ENCODE measurements at regions of chr14 and their contacts with region 1.

Region 1: GRCh38 chr14:22570132-22570949 is 18.7 kb downstream of the DAD1 start:
- DNase-seq: peak in 8 of 9 donors; percentile 72 to 98 (median 96)
- ATAC-seq: peak; percentile 98
- H3K4me3 ChIP-seq: peak overlapping the region; percentile 53
- H3K4me3 Mint-ChIP-seq: peak overlapping the region; percentile 68 to 95 (median 80)
- H3K27ac ChIP-seq: peak overlapping the region; percentile 87
- H3K27ac Mint-ChIP-seq: peak overlapping the region; percentile 77 to 99 (median 96)
- H3K4me1 ChIP-seq: peaks cover 49 to 51% of the 10 kb centered on the region in 2 donors
- H3K4me1 Mint-ChIP-seq: peaks cover 28 to 72% (median 68%) of the 10 kb centered on the region in 7 donors
- H3K27me3 ChIP-seq: no peaks in the 10 kb centered on the region
- H3K27me3 Mint-ChIP-seq: no peaks in the 10 kb centered on the region

Region 2: DNA sequence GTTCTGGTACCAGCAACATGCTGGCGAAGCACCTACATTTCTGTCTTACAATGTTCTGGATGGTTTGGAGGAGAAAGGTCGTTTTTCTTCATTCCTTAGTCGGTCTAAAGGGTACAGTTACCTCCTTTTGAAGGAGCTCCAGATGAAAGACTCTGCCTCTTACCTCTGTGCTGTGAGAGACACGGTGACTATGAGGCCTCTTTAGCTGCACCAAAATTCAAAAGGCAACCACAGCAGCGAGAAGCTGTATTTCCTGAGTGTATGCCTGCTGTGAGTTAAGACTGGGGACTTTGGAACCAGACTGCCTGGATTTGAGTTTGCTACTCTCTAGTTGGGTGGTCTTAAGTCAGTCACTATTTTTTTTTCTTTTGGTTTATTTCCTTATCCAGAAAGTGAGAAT is 926.9 kb before region 1 on chr14:
- CTCF ChIA-PET with region 1: interaction called, 3 read pairs
- POLR2A ChIA-PET with region 1: no interaction called
- intact Hi-C with region 1: loop called in 1 of 2 experiments (anchors 5 kb)
- DNase-seq: peak in 1 of 9 donors; percentile 5
- ATAC-seq: no peak
- H3K4me3 ChIP-seq: no peak overlapping the region
- H3K4me3 Mint-ChIP-seq: peak overlapping the region in 3 of 10 donors; percentile 42 to 52 (median 42)
- H3K27ac ChIP-seq: no peak overlapping the region
- H3K27ac Mint-ChIP-seq: peak overlapping the region in 3 of 9 donors; percentile 25 to 64 (median 36)
- H3K4me1 ChIP-seq: no peaks in the 10 kb centered on the region
- H3K4me1 Mint-ChIP-seq: peaks cover 0 to 14% (median 6%) of the 10 kb centered on the region in 7 donors
- H3K27me3 ChIP-seq: no peaks in the 10 kb centered on the region
- H3K27me3 Mint-ChIP-seq: peaks cover 0 to 17% (median 4%) of the 10 kb centered on the region in 5 donors

Region 3: DNA sequence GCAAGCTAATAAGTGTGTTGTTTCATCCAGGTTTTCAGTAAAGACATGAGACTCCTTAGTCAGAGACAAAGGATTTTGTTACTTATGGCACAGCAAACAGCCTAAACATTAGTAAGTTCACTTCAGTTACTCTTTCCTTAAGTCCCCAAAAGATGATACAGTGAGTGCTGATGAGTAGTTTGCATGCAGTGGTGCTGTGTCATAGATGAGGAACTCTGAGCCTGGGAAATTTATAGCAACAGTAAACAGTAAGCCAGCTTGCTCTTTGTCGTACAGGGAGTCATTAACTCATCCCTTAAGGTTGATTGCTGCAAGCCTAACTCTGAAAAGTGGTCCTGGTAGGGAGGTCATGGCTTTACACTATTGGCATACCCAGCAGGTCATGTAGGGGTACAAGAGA is 688.1 kb before region 1 on chr14:
- CTCF ChIA-PET with region 1: interaction called, 3 read pairs
- POLR2A ChIA-PET with region 1: interaction called, 6 read pairs
- intact Hi-C with region 1: loop called in 1 of 2 experiments (anchors 1 kb)
- DNase-seq: no peak
- ATAC-seq: no peak
- H3K4me3 ChIP-seq: no peak overlapping the region
- H3K4me3 Mint-ChIP-seq: no peak overlapping the region
- H3K27ac ChIP-seq: no peak overlapping the region
- H3K27ac Mint-ChIP-seq: no peak overlapping the region
- H3K4me1 ChIP-seq: peaks cover 0 to 2% of the 10 kb centered on the region in 2 donors
- H3K4me1 Mint-ChIP-seq: peaks cover 0 to 17% (median 10%) of the 10 kb centered on the region in 7 donors
- H3K27me3 ChIP-seq: no peaks in the 10 kb centered on the region
- H3K27me3 Mint-ChIP-seq: peaks cover 0 to 45% (median 0%) of the 10 kb centered on the region in 5 donors

Region 4: GRCh38 chr14:22084393-22085281 is 485.7 kb before region 1 on chr14:
- CTCF ChIA-PET with region 1: interaction called, 4 read pairs
- POLR2A ChIA-PET with region 1: no interaction called
- intact Hi-C with region 1: loop called in 1 of 2 experiments (anchors 1 kb)
- DNase-seq: peak in 6 of 9 donors; percentile 37 to 62 (median 52)
- ATAC-seq: peak; percentile 76
- H3K4me3 ChIP-seq: no peak overlapping the region
- H3K4me3 Mint-ChIP-seq: peak overlapping the region; percentile 41 to 76 (median 62)
- H3K27ac ChIP-seq: no peak overlapping the region
- H3K27ac Mint-ChIP-seq: peak overlapping the region; percentile 60 to 87 (median 75)
- H3K4me1 ChIP-seq: peaks cover 0 to 4% of the 10 kb centered on the region in 2 donors
- H3K4me1 Mint-ChIP-seq: peaks cover 2 to 40% (median 36%) of the 10 kb centered on the region in 7 donors
- H3K27me3 ChIP-seq: no peaks in the 10 kb centered on the region
- H3K27me3 Mint-ChIP-seq: no peaks in the 10 kb centered on the region

Region 5: DNA sequence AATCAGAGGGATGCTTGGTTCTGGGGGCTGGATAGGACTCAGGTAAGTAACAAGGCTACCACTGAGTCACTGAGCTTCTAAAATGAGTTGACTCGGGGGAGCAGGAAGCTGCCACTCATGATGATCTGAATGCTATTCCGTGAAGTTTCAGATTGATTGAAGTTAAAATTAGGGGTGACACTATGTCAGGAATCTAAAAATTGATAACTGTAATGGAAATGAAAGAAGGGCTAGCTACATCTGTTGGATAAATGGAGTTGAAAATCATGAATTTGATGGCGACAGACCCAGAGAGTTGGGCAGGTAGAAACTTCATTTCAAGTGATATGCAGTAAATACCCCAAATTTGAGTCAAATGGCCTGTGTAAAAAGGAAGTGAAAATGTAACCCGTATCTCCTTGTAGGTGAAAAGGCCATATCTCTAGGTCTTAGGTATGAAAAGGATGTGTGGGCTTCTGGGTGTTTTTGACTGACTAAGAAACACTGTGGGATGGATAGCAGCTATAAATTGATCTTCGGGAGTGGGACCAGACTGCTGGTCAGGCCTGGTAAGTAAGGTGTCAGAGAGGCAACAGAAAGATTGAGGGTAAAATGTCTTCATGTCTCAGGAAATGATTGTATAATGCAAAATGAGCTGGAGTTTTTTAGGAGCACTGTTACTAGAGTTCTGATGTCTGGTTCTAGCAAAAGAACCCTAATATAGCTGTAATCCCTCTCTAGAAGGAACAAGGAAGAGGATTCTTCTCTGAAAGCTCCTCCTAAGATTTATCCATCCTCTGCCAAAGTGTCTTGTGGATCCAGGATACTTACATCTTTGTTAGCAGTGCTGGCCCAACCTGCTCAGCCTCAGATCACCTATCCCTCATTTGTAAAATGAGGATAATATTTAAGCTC is 38.6 kb before region 1 on chr14:
- CTCF ChIA-PET with region 1: interaction called, 13 read pairs
- POLR2A ChIA-PET with region 1: interaction called, 12 read pairs
- intact Hi-C with region 1: no loop called
- DNase-seq: peak in 2 of 9 donors; percentile 55 to 61
- ATAC-seq: peak; percentile 51
- H3K4me3 ChIP-seq: peak overlapping the region; percentile 44
- H3K4me3 Mint-ChIP-seq: peak overlapping the region; percentile 79 to 92 (median 86)
- H3K27ac ChIP-seq: peak overlapping the region; percentile 90
- H3K27ac Mint-ChIP-seq: peak overlapping the region; percentile 90 to 99 (median 94)
- H3K4me1 ChIP-seq: peaks cover 77 to 90% of the 10 kb centered on the region in 2 donors
- H3K4me1 Mint-ChIP-seq: peaks cover 56 to 98% (median 92%) of the 10 kb centered on the region in 7 donors
- H3K27me3 ChIP-seq: no peaks in the 10 kb centered on the region
- H3K27me3 Mint-ChIP-seq: no peaks in the 10 kb centered on the region

Region 6: GRCh38 chr14:22644305-22644635 is 73.9 kb after region 1 on chr14 and contains the start of gene OR6J1:
- CTCF ChIA-PET with region 1: interaction called, 7 read pairs
- POLR2A ChIA-PET with region 1: interaction called, 3 read pairs
- intact Hi-C with region 1: loop called in 1 of 2 experiments (anchors 1 kb)
- DNase-seq: no peak
- ATAC-seq: no peak
- H3K4me3 ChIP-seq: no peak within 1 kb of the TSS
- H3K4me3 Mint-ChIP-seq: no peak within 1 kb of the TSS
- H3K27ac ChIP-seq: no peak within 1 kb of the TSS
- H3K27ac Mint-ChIP-seq: peak within 1 kb of the TSS in 3 of 9 donors; percentile 25 to 76 (median 31)
- H3K4me1 ChIP-seq: no peaks in the 10 kb centered on the region
- H3K4me1 Mint-ChIP-seq: peaks cover 0 to 7% (median 5%) of the 10 kb centered on the region in 7 donors
- H3K27me3 ChIP-seq: no peaks in the 10 kb centered on the region
- H3K27me3 Mint-ChIP-seq: peaks cover 0 to 3% (median 0%) of the 10 kb centered on the region in 5 donors
- total RNA-seq, gene OR6J1: not detected

Region 7: GRCh38 chr14:22791301-22791700 is 221.0 kb after region 1 on chr14:
- CTCF ChIA-PET with region 1: no interaction called
- POLR2A ChIA-PET with region 1: no interaction called
- intact Hi-C with region 1: no loop called
- DNase-seq: no peak
- ATAC-seq: peak; percentile 35
- H3K4me3 ChIP-seq: no peak overlapping the region
- H3K4me3 Mint-ChIP-seq: no peak overlapping the region
- H3K27ac ChIP-seq: no peak overlapping the region
- H3K27ac Mint-ChIP-seq: no peak overlapping the region
- H3K4me1 ChIP-seq: no peaks in the 10 kb centered on the region
- H3K4me1 Mint-ChIP-seq: peaks cover 0 to 8% (median 0%) of the 10 kb centered on the region in 7 donors
- H3K27me3 ChIP-seq: no peaks in the 10 kb centered on the region
- H3K27me3 Mint-ChIP-seq: peaks cover 0 to 11% (median 6%) of the 10 kb centered on the region in 5 donors

Region 8: GRCh38 chr14:22900081-22900799 is 329.9 kb after region 1 on chr14:
- CTCF ChIA-PET with region 1: interaction called, 8 read pairs
- POLR2A ChIA-PET with region 1: interaction called, 4 read pairs
- intact Hi-C with region 1: loop called (anchors 1 kb)
- DNase-seq: peak in 7 of 9 donors; percentile 41 to 72 (median 66)
- ATAC-seq: peak; percentile 94
- H3K4me3 ChIP-seq: no peak overlapping the region
- H3K4me3 Mint-ChIP-seq: no peak overlapping the region
- H3K27ac ChIP-seq: peak overlapping the region; percentile 15
- H3K27ac Mint-ChIP-seq: peak overlapping the region in 8 of 9 donors; percentile 0 to 58 (median 35)
- H3K4me1 ChIP-seq: peaks cover 0 to 4% of the 10 kb centered on the region in 2 donors
- H3K4me1 Mint-ChIP-seq: peaks cover 10 to 24% (median 15%) of the 10 kb centered on the region in 7 donors
- H3K27me3 ChIP-seq: no peaks in the 10 kb centered on the region
- H3K27me3 Mint-ChIP-seq: no peaks in the 10 kb centered on the region